Activated CD4-positive, alpha-beta T cell treated with anti-CD3 and anti-CD28 coated beads for 36 hours (primary cell): ENCODE measurements at regions of chr9 and their contacts with region 1.

Region 1: GRCh38 chr9:79782636-79783035 is 210.9 kb downstream of the TLE4 start:
- DNase-seq: no peak
- ATAC-seq: no peak
- H3K4me3 Mint-ChIP-seq: no peak overlapping the region
- H3K27ac Mint-ChIP-seq: no peak overlapping the region
- H3K4me1 Mint-ChIP-seq: no peaks in the 10 kb centered on the region
- H3K27me3 Mint-ChIP-seq: no peaks in the 10 kb centered on the region

Region 2: DNA sequence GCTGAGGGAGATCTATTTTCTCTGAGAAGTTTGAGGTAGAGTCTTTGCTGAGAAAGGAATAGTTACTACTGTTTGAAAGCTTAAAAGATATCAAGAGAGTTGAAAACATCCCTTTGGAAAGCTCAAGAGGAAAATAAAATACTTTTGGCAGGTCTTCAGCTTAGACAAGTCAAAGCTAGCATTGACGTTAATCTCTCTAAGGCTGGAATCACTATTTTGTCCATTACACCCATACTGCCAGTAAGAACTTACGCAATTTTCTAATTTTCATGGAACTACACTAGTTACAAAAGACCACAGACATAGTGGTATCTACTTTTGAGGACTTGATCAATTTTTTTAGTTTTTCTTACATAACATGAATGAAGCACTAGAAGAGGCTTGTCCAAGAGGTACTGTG is 990.9 kb before region 1 on chr9:
- CTCF ChIA-PET with region 1: no interaction called
- POLR2A ChIA-PET with region 1: no interaction called
- intact Hi-C with region 1: no loop called
- DNase-seq: no peak
- ATAC-seq: no peak
- H3K4me3 Mint-ChIP-seq: no peak overlapping the region
- H3K27ac Mint-ChIP-seq: no peak overlapping the region
- H3K4me1 Mint-ChIP-seq: no peaks in the 10 kb centered on the region
- H3K27me3 Mint-ChIP-seq: peaks cover 3% of the 10 kb centered on the region

Region 3: GRCh38 chr9:79731171-79731890 is 51.3 kb before region 1 on chr9:
- CTCF ChIA-PET with region 1: no interaction called
- POLR2A ChIA-PET with region 1: no interaction called
- intact Hi-C with region 1: loop called in 1 of 2 experiments (anchors 2 kb)
- DNase-seq: peak; percentile 23
- ATAC-seq: peak; percentile 82
- H3K4me3 Mint-ChIP-seq: no peak overlapping the region
- H3K27ac Mint-ChIP-seq: no peak overlapping the region
- H3K4me1 Mint-ChIP-seq: peaks cover 3% of the 10 kb centered on the region
- H3K27me3 Mint-ChIP-seq: no peaks in the 10 kb centered on the region